Gastrocnemius medialis (tissue), 4 donors: ENCODE measurements at regions of chr6 and their contacts with region 1.

Region 1: GRCh38 chr6:18115356-18115755 is 7.1 kb downstream of the NHLRC1 start:
- DNase-seq: no peak
- ATAC-seq: no peak
- H3K4me3 ChIP-seq: no peak overlapping the region
- H3K27ac ChIP-seq: no peak overlapping the region
- H3K4me1 ChIP-seq: peaks cover 0 to 3% of the 10 kb centered on the region in 2 donors
- H3K27me3 ChIP-seq: no peaks in the 10 kb centered on the region
- CTCF ChIP-seq: no peak
- POLR2A ChIP-seq: no peak

Region 2: GRCh38 chr6:17820055-17820454 is 295.3 kb before region 1 on chr6:
- in situ Hi-C with region 1: loop called in 2 of 4 experiments (anchors 10 to 25 kb)
- intact Hi-C with region 1: no loop called
- DNase-seq: peak; percentile 9 to 74
- ATAC-seq: peak; percentile 84 to 99
- H3K4me3 ChIP-seq: no peak overlapping the region
- H3K27ac ChIP-seq: peak overlapping the region; percentile 12 to 51 (median 40)
- H3K4me1 ChIP-seq: peaks cover 3 to 6% of the 10 kb centered on the region in 2 donors
- H3K27me3 ChIP-seq: no peaks in the 10 kb centered on the region
- CTCF ChIP-seq: no peak
- POLR2A ChIP-seq: no peak

Region 3: GRCh38 chr6:17998456-17998855 is 116.9 kb before region 1 on chr6:
- in situ Hi-C with region 1: loop called in 1 of 4 experiments (anchors 10 kb)
- intact Hi-C with region 1: no loop called
- DNase-seq: no peak
- ATAC-seq: no peak
- H3K4me3 ChIP-seq: no peak overlapping the region
- H3K27ac ChIP-seq: no peak overlapping the region
- H3K4me1 ChIP-seq: no peaks in the 10 kb centered on the region
- H3K27me3 ChIP-seq: no peaks in the 10 kb centered on the region
- CTCF ChIP-seq: no peak
- POLR2A ChIP-seq: no peak